ENCODE measurements at regions of chr4 and their contacts with region 1.

Region 1: DNA sequence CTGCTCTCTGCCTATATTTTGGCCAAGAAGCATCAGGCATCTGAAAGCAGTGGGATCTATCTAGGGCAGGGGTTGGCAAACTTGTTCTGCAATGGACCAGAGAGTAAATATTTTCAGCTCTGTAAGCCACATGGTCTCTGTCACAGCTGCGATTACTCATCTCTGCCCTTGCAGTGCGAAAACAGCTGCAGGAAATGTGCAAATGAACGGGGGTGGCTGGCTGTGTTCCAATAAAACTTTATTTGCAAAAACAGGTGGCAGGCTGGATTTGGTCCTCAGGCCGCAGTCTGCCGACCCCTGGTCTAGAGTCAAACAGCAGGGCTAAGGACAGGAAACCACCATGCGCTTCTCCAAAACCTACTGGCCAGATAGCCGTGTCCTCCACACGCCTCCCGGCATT is 48.6 kb downstream of the ACOX3 start:
- DNase-seq: peak; percentile 22
- H3K4me3 ChIP-seq: no peak overlapping the region
- H3K27ac ChIP-seq: peak overlapping the region in 1 of 2 donors; percentile 26
- H3K4me1 ChIP-seq: peaks cover 12% of the 10 kb centered on the region
- H3K27me3 ChIP-seq: no peaks in the 10 kb centered on the region
- CTCF ChIP-seq: no peak
- POLR2A ChIP-seq: no peak

Region 2: DNA sequence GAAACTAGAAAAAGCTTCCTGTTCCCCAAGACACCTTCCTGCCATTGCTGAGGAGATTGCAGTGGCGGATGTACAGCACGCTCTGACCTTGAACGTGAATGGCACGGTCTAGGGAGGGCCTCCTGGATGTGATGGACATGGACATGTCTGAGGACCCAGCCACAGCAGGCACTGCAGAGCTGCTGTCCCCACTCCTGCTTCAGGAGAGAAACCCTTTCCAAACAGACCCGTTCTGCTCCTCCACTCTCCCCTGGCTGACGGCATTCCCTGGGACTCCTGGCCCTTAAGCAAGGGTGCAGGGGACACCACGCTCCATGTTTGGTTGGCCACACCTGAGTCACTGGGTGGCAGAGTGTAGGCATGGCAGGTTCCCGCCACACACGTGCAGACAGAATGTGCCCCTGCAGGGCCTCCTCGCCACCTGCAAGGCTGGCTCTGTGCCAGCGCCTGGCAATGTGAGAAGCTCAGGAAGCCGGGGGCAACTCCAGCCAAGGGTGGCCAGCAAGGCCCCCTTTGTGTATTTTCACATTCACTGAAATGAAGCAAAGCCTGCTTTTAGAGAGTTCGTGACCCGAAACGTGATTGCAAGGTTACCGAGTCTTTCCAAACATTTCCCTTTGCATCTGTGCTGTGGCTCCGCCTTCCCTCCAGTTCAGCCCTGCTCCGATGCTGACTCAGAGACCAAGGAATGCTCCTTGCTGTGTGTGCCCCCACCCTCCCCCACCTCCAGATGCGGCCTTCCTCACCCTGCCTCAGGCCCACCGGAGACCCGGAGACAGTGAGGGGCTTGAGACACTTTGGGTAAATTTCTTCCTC is 76.3 kb before region 1 on chr4:
- intact Hi-C with region 1: loop called (anchors 5 kb)
- DNase-seq: peak; percentile 51
- H3K4me3 ChIP-seq: no peak overlapping the region
- H3K27ac ChIP-seq: peak overlapping the region; percentile 5 to 13
- H3K4me1 ChIP-seq: no peaks in the 10 kb centered on the region
- H3K27me3 ChIP-seq: no peaks in the 10 kb centered on the region
- CTCF ChIP-seq: no peak
- POLR2A ChIP-seq: no peak

Region 3: DNA sequence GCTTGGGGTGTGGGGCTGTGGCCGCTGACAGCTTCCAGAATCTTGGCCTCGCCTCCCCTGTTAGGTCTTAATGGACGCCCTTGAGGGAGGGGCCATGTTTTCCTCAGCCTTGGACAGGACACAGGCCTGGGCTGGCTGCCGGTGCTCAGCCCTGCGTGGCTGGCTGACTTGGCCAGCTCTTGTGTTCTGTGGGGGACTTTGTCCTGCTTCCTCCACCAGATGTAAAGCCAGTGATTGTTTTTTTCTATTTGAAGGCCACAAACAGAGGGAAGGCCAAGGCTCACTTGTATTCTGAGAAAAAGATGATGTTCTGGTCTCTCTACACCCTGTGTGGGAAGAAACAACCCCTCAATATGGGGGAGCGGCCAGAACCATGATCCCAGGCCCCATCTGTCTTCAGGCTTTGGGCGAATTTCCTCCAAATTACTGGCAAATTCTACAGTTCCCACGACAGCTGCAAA is 51.2 kb before region 1 on chr4:
- intact Hi-C with region 1: loop called (anchors 5 kb)
- DNase-seq: no peak
- H3K4me3 ChIP-seq: no peak overlapping the region
- H3K27ac ChIP-seq: peak overlapping the region in 1 of 2 donors; percentile 8
- H3K4me1 ChIP-seq: no peaks in the 10 kb centered on the region
- H3K27me3 ChIP-seq: no peaks in the 10 kb centered on the region
- CTCF ChIP-seq: no peak
- POLR2A ChIP-seq: no peak

Region 4: GRCh38 chr4:8428293-8429097 is 36.5 kb after region 1 on chr4:
- intact Hi-C with region 1: no loop called
- DNase-seq: peak; percentile 81
- H3K4me3 ChIP-seq: peak overlapping the region; percentile 59 to 86
- H3K27ac ChIP-seq: peak overlapping the region; percentile 84
- H3K4me1 ChIP-seq: peaks cover 2% of the 10 kb centered on the region
- H3K27me3 ChIP-seq: no peaks in the 10 kb centered on the region
- CTCF ChIP-seq: peak in 2 of 4 experiments; percentile 24 to 26
- POLR2A ChIP-seq: peak; percentile 83